A673 (cell line): ENCODE measurements at regions of chr17 and their contacts with region 1.

Region 1: GRCh38 chr17:77054936-77055335 is 85.8 kb upstream of the SEC14L1 start:
- DNase-seq: no peak
- H3K4me3 ChIP-seq: no peak overlapping the region
- H3K27ac ChIP-seq: no peak overlapping the region
- H3K4me1 ChIP-seq: no peaks in the 10 kb centered on the region
- H3K27me3 ChIP-seq: no peaks in the 10 kb centered on the region
- CTCF ChIP-seq: no peak

Region 2: GRCh38 chr17:76826330-76827068 is 228.4 kb before region 1 on chr17:
- CTCF ChIA-PET with region 1: no interaction called
- POLR2A ChIA-PET with region 1: no interaction called
- intact Hi-C with region 1: no loop called
- DNase-seq: peak; percentile 44
- H3K4me3 ChIP-seq: no peak overlapping the region
- H3K27ac ChIP-seq: peak overlapping the region; percentile 18
- H3K4me1 ChIP-seq: peaks cover 9% of the 10 kb centered on the region
- H3K27me3 ChIP-seq: no peaks in the 10 kb centered on the region
- CTCF ChIP-seq: no peak

Region 3: GRCh38 chr17:76868176-76868668 is 186.7 kb before region 1 on chr17 and contains the start of gene MGAT5B:
- CTCF ChIA-PET with region 1: interaction called, 28 read pairs
- POLR2A ChIA-PET with region 1: interaction called, 3 read pairs
- intact Hi-C with region 1: loop called (anchors 1 kb)
- DNase-seq: peak; percentile 81
- H3K4me3 ChIP-seq: peak within 1 kb of the TSS; percentile 44
- H3K27ac ChIP-seq: no peak within 1 kb of the TSS
- H3K4me1 ChIP-seq: peaks cover 9% of the 10 kb centered on the region
- H3K27me3 ChIP-seq: peaks cover 17% of the 10 kb centered on the region
- CTCF ChIP-seq: peak; percentile 59
- total RNA-seq, gene MGAT5B: 1.1 and 3.7 TPM in 2 replicates

Region 4: DNA sequence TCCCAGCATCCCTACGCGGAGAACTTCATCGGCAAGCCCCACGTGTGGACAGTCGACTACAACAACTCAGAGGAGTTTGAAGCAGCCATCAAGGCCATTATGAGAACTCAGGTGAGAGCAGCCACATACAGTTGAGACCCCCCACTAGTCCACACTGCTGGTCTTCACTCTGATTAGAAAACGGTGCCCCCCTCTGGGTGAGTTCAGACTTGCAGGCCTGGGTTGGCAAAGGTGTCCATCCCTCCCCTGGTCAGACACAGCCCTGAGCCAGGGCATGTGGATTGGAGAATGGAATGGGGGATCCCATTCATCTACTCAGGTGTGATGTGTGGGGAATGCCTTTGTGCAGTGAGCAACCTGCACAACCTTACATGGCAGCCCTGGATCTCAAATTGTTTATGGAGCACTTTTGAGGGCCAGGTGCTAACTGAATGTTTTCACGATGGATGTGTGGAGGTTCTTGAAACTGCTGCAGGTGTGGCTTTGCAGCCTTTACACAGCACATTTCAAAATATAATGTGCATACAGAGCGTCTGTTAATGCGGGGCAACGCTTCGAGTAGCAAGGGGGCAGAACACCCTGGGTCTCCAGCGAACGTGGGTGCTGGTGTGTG is 114.1 kb before region 1 on chr17:
- CTCF ChIA-PET with region 1: no interaction called
- POLR2A ChIA-PET with region 1: no interaction called
- intact Hi-C with region 1: no loop called
- DNase-seq: no peak
- H3K4me3 ChIP-seq: no peak overlapping the region
- H3K27ac ChIP-seq: no peak overlapping the region
- H3K4me1 ChIP-seq: no peaks in the 10 kb centered on the region
- H3K27me3 ChIP-seq: no peaks in the 10 kb centered on the region
- CTCF ChIP-seq: peak; percentile 40

Region 5: GRCh38 chr17:77011173-77012011 is 43.5 kb before region 1 on chr17:
- CTCF ChIA-PET with region 1: interaction called, 9 read pairs
- POLR2A ChIA-PET with region 1: no interaction called
- intact Hi-C with region 1: loop called (anchors 2 kb)
- DNase-seq: peak; percentile 73
- H3K4me3 ChIP-seq: no peak overlapping the region
- H3K27ac ChIP-seq: no peak overlapping the region
- H3K4me1 ChIP-seq: no peaks in the 10 kb centered on the region
- H3K27me3 ChIP-seq: no peaks in the 10 kb centered on the region
- CTCF ChIP-seq: peak; percentile 82

Region 6: DNA sequence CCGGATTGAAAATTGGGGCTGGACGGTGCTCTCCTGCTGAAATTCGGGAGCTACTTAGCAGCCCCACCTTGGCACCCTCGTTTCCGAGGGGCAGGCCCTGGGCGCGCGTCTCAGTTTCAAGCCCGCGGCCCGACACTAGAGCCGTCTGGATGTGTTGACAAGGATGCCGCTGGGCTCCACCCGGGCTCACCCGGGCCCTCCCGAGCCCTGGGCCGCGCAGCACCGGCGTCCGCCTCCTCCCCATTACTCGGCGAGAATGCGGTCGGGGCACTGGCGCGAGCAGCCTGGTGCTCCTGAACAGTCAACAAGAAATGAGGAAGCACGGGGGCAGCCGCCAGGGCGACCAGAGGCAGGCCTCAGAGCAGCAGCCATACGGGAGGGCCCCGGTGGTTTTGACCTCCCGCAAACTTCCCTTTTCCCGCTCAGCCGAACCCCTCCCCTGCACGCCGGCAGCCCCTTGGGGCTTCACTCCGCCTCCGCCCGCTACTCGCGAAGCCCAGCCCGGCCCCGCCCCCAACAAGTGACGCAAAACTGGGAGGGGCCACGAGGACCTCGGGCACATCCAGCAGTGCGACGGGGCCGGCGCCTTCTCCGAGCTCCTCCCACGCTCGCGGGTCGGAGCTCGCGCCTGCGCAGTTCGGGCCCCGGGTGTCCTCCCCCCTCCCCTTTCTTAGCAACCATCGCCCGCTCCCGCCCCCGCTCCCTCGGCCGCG is 85.4 kb after region 1 on chr17:
- CTCF ChIA-PET with region 1: no interaction called
- POLR2A ChIA-PET with region 1: no interaction called
- intact Hi-C with region 1: no loop called
- DNase-seq: peak; percentile 99
- H3K4me3 ChIP-seq: peak overlapping the region; percentile 93
- H3K27ac ChIP-seq: peak overlapping the region; percentile 83
- H3K4me1 ChIP-seq: peaks cover 20% of the 10 kb centered on the region
- H3K27me3 ChIP-seq: no peaks in the 10 kb centered on the region
- CTCF ChIP-seq: no peak